H1 (cell line): ENCODE measurements at regions of chr11 and their contacts with region 1.

Region 1: DNA sequence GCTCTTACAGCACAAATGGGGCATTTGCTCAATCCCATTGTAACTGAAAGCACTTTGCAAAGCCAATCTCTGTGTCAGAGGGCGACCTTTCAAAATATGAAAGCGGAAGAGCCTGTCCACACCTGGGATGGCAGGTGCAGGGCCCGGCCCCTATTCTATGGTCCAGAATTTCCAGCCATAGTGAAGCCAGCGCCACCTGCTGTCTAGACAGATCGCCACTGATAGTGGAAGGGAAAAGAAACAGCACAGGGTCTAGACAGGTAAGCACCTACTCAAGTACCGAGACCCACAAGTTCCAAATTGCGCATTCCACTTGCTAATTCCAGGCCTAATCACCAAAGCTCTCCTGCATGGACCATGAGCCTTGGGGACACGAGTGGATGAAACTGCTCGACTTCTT is 141.4 kb downstream of the NTM start:
- DNase-seq: peak; percentile 25 to 82
- H3K4me3 ChIP-seq: no peak overlapping the region
- H3K27ac ChIP-seq: no peak overlapping the region
- H3K4me1 ChIP-seq: no peaks in the 10 kb centered on the region; a peak in 1 of 7 replicates
- H3K27me3 ChIP-seq: no peaks in the 10 kb centered on the region
- CTCF ChIP-seq: peak; percentile 65 to 84 (median 82)
- EP300 ChIP-seq: no peak
- POLR2A ChIP-seq: no peak
- RAD21 ChIP-seq: peak; percentile 81 to 87

Region 2: DNA sequence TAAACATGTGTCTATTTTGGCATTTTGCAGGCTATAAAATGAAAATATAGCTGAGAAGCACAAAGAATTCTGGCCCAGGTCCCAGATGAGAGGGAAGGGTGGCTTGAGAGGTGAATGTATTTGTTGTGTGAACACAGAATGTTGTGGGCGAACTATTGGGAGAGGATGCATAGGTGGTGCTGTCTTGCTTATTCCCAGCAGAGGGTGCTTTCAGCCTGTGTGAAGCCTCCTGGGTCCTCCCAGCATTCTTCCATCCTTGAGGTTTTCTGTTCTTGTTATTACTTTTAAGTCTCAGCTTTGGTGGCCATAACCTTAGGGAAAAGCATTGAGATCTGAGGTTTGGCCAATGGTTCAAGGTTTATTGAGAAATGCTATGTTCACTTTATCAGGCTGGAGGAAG is 486.8 kb before region 1 on chr11:
- CTCF ChIA-PET with region 1: interaction called, 17 read pairs
- POLR2A ChIA-PET with region 1: interaction called, 3 read pairs
- DNase-seq: no peak
- H3K4me3 ChIP-seq: no peak overlapping the region
- H3K27ac ChIP-seq: no peak overlapping the region
- H3K4me1 ChIP-seq: no peaks in the 10 kb centered on the region
- H3K27me3 ChIP-seq: no peaks in the 10 kb centered on the region
- CTCF ChIP-seq: peak; percentile 72 to 93 (median 82)
- EP300 ChIP-seq: no peak
- POLR2A ChIP-seq: no peak
- RAD21 ChIP-seq: peak; percentile 93 to 94

Region 3: DNA sequence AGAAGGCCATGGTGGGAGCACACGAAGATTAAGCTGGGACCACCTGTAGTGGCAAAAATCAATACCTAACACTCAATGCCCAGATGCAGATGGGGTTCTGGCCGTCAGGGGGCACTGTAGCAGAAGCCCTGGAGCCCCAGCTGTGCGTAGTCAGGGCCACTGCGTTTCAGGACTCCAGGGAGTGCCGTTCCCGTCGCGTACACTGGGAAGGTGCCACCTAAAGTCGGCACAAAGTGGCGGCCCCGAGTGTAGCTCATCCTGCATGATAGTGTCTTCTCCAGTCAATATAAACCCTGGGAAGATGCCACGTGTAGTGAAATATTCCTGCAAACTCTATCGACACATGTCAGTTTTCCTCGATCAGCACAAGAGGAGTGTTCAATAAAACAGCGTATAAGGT is 265.1 kb before region 1 on chr11:
- CTCF ChIA-PET with region 1: interaction called, 10 read pairs
- POLR2A ChIA-PET with region 1: no interaction called
- DNase-seq: peak; percentile 31 to 90
- H3K4me3 ChIP-seq: peak overlapping the region in 1 of 4 experiments; percentile 32; a peak in 1 of 8 replicates
- H3K27ac ChIP-seq: no peak overlapping the region
- H3K4me1 ChIP-seq: peaks cover 2 to 6% (median 3%) of the 10 kb centered on the region in 4 experiments; a peak in 4 of 7 replicates
- H3K27me3 ChIP-seq: no peaks in the 10 kb centered on the region
- CTCF ChIP-seq: peak; percentile 87 to 97 (median 93)
- EP300 ChIP-seq: no peak
- POLR2A ChIP-seq: no peak
- RAD21 ChIP-seq: peak; percentile 83 to 89

Region 4: DNA sequence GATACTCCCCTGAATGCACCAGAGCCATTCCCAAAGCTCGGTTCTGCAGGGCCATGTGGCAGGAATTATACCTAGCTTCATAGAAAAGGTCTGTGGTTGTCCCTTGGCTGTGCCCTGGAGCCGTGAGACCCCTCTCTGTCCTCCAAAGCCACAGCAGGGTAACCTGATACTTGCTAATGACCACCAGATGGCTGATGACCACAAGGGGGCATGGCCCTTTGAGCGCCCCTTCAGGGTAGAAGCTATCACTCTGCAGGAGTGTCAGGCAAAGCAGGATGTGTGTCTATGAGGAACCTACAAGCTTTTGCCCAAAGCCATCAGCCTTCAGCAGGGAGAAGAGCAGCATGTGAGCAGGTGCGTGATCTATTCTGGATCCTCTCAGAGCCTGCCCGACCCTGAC is 46.0 kb before region 1 on chr11:
- CTCF ChIA-PET with region 1: interaction called, 58 read pairs
- POLR2A ChIA-PET with region 1: no interaction called
- DNase-seq: peak; percentile 38 to 74
- H3K4me3 ChIP-seq: no peak overlapping the region
- H3K27ac ChIP-seq: no peak overlapping the region
- H3K4me1 ChIP-seq: peaks cover 2 to 3% (median 2%) of the 10 kb centered on the region in 4 experiments; a peak in 4 of 7 replicates
- H3K27me3 ChIP-seq: no peaks in the 10 kb centered on the region
- CTCF ChIP-seq: peak; percentile 75 to 99 (median 84)
- EP300 ChIP-seq: no peak
- POLR2A ChIP-seq: no peak
- RAD21 ChIP-seq: peak; percentile 58 to 73

Region 5: DNA sequence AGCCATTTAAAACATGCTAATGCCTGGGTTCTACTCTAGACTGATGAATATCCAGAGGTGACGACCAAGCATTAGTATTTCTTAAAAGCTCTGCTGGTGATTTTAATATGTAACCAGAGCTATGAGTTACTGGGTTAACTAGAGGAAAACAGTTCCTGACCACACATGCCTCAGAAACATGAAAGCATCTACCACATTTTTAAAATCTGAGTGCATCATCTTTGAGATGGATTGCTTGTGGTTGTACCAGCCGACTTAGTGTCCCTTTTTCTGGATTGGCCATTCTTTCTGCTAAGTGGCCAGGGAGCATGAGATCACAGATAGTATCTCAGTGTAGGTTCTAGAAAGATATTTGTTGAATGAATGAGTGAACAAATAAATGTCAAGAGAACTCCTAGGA is 11.1 kb after region 1 on chr11:
- CTCF ChIA-PET with region 1: interaction called, 47 read pairs
- POLR2A ChIA-PET with region 1: no interaction called
- DNase-seq: no peak
- H3K4me3 ChIP-seq: no peak overlapping the region
- H3K27ac ChIP-seq: no peak overlapping the region
- H3K4me1 ChIP-seq: no peaks in the 10 kb centered on the region
- H3K27me3 ChIP-seq: no peaks in the 10 kb centered on the region
- CTCF ChIP-seq: no peak
- EP300 ChIP-seq: no peak
- POLR2A ChIP-seq: no peak
- RAD21 ChIP-seq: no peak

Region 6: DNA sequence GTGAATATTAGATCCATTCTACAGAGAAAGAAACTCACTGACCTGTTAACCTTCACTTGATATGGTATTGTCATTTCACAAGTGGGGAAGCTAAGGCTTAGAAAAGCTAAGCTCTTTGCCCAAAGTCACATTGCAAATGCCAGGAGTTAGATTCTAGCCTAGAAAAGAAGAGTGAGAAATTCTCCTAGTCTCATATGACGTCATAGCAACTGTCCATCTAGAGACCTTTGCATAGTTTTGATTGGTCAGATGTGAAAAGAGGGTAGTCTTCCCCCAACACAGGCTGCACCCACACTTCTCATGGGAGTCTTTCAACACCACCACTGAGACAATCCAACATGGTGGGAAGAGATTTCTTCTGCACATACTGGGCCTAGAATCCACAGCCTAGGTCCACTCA is 56.5 kb after region 1 on chr11:
- CTCF ChIA-PET with region 1: no interaction called
- POLR2A ChIA-PET with region 1: no interaction called
- DNase-seq: no peak
- H3K4me3 ChIP-seq: no peak overlapping the region
- H3K27ac ChIP-seq: no peak overlapping the region
- H3K4me1 ChIP-seq: no peaks in the 10 kb centered on the region; a peak in 1 of 7 replicates
- H3K27me3 ChIP-seq: no peaks in the 10 kb centered on the region
- CTCF ChIP-seq: no peak
- EP300 ChIP-seq: no peak
- POLR2A ChIP-seq: no peak
- RAD21 ChIP-seq: no peak

Region 7: DNA sequence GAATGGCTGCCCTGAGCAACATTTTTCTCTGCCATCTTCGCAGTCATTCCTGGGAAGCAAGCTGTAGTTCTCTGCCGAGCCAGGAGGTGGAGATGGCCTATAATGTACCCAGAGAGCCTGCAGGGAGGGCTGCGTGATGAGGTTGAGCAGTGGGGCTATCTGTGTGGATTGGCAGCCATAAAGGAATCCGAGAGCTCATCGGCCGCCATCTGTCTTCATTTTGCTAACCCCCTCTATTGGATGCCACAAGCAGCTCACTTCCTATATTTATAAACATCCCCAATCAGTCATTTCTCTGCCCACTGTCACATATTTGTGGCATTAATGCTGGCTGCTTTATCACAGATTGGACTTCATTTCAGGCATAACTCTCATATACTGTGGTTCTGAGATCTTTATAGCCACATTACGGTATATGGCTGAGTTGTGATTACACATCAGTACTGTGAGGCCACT is 68.2 kb after region 1 on chr11:
- CTCF ChIA-PET with region 1: interaction called, 11 read pairs
- POLR2A ChIA-PET with region 1: no interaction called
- DNase-seq: peak in 1 of 2 experiments; percentile 75
- H3K4me3 ChIP-seq: no peak overlapping the region
- H3K27ac ChIP-seq: no peak overlapping the region
- H3K4me1 ChIP-seq: peaks cover 3 to 4% (median 4%) of the 10 kb centered on the region in 4 experiments; a peak in 4 of 7 replicates
- H3K27me3 ChIP-seq: no peaks in the 10 kb centered on the region
- CTCF ChIP-seq: peak; percentile 72 to 91 (median 80)
- EP300 ChIP-seq: no peak
- POLR2A ChIP-seq: no peak
- RAD21 ChIP-seq: peak; percentile 74 to 82